Activated naive CD4-positive, alpha-beta T cell treated with anti-CD3 and anti-CD28 coated beads for 36 hours (primary cell): ENCODE measurements at regions of chr1 and their contacts with region 1.

Region 1: DNA sequence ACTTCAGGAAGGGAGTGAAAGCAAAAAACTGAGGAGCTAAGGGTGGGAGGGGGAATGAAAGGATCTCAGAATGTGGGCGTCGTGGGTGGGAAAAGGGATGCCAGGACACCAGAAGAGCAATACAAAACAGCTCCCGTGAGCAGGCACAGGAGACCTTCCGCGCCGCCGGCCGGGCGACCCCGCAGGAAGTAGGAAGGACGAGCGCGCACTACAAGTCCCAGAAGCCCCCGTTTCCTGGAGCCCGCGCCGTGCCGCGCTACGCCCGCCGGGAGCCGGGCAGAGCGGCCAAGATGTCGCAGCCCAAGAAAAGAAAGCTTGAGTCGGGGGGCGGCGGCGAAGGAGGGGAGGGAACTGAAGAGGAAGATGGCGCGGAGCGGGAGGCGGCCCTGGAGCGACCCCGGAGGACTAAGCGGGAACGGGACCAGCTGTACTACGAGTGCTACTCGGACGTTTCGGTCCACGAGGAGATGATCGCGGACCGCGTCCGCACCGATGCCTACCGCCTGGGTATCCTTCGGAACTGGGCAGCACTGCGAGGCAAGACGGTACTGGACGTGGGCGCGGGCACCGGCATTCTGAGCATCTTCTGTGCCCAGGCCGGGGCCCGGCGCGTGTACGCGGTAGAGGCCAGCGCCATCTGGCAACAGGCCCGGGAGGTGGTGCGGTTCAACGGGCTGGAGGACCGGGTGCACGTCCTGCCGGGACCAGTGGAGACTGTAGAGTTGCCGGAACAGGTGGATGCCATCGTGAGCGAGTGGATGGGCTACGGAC is at the start of gene PRMT6:
- DNase-seq: peak; percentile 84
- H3K4me3 Mint-ChIP-seq: peak within 1 kb of the TSS; percentile 93
- H3K27ac Mint-ChIP-seq: peak within 1 kb of the TSS; percentile 90
- H3K4me1 Mint-ChIP-seq: peaks cover 14% of the 10 kb centered on the region
- H3K27me3 Mint-ChIP-seq: no peaks in the 10 kb centered on the region
- total RNA-seq, gene PRMT6: 6.7 to 7.5 TPM

Region 2: DNA sequence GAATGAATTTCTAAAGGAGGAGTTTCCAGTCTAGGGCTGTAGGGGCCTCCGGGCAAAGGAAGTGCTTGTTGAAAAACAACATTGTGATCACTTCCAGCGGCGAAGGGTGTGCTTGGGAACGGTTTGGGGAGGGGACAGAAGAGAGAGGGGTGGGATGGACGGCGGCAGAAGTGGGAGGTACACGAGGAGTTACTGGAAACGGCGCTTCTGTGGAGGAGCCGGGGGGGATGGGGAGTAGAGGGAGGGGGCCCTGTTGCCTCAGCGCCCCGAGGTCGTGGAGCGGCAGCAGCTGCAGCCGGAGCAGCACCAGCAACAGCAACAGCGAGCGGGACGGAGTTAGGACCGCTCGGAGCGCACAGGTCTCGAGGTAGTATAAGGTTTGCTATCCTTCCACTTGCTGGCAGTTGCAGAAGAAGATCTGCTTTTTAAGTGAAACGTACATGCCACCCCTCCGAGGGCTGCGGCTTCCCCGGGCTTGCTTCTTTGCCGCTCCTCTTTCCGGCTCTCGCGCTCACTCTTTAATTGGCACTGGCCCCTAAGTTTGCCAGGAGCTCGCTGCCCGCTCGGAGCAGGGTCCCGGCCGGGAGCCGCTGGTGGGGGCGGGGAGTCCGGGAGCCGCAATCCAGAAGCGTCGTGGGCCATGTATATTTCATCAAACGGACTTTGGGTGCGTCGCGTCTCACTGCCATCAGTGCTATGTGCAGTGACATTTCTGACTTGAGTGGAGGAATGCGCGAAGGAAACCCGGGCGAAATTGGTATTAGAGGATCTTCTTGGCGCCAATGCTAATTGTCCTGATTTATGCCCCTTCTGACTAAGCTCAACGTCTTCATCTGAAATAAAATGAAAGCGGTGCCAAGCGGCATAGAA is 83.5 kb after region 1 on chr1:
- CTCF ChIA-PET with region 1: interaction called, 6 read pairs
- intact Hi-C with region 1: loop called (anchors 1 kb)
- DNase-seq: peak; percentile 24
- H3K4me3 Mint-ChIP-seq: peak overlapping the region; percentile 68
- H3K27ac Mint-ChIP-seq: no peak overlapping the region
- H3K4me1 Mint-ChIP-seq: peaks cover 16% of the 10 kb centered on the region
- H3K27me3 Mint-ChIP-seq: peaks cover 58% of the 10 kb centered on the region